ENCODE measurements at regions of chr10 and their contacts with region 1.

Region 1: DNA sequence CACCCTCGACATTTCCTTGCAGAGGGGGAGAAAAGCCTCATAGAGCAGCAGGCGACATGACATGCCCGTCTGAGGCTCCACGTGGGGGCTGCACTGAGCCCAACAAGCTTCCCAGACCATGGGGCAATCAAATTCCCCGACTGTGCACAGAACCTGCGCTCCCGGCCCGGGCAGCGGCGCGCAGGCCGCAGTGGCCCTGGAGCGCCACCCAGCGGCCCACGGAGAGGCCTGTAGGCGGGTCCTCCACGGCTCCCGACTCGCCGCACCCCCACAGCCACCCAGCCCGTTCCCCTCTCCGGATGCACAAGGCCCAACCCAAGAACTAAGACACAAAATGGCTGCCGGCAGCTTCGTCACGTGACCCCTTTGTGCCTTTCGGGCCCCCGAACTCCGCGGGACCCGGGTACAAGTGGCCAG is 816 bp downstream of the EPC1 start:
- DNase-seq: peak; percentile 97 to 98 (median 98)
- H3K4me3 ChIP-seq: peak overlapping the region; percentile 82 to 100
- H3K4me3 Mint-ChIP-seq: peak overlapping the region; percentile 90 to 98 (median 94)
- H3K27ac ChIP-seq: peak overlapping the region; percentile 100
- H3K27ac Mint-ChIP-seq: peak overlapping the region; percentile 99 to 100 (median 99)
- H3K4me1 ChIP-seq: peaks cover 78% of the 10 kb centered on the region
- H3K4me1 Mint-ChIP-seq: peaks cover 48 to 86% (median 65%) of the 10 kb centered on the region in 4 donors
- H3K27me3 ChIP-seq: no peaks in the 10 kb centered on the region
- H3K27me3 Mint-ChIP-seq: no peaks in the 10 kb centered on the region

Region 2: DNA sequence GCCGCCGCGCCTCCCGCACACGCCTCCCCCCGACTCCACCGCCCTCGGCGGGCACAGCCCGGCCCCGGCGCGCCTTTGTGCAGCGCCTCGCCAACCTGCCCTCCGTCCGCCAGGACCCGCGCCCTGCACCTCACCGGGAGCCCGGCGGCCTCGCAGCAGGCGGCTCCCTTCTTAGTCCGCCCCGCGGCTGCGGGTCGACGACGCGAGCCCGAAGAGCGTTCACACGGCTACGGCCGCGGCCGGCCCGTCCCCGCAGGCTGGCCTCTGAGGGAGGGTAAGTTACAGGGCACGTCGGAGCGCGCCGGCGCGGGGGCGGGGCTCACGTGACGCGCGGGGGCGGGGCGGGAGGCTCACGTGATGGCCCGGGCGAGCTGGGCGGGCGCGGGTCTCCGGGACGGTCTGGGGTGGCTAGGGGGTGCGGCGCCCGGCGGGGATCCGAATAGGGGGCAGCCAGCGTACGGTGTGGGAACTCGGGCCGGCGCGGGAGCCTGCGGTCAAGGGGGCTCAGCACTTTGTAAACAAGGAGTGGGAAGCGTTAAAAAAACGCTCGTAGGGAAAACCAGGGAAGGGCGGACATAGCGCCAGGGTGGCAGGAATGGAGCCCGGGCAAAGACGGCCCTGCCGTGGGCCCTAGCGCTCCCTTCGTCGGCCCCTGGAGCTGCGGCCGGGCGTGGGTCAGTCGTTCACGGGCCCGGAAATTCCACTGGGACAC is 417.4 kb before region 1 on chr10 and contains the start of gene ARHGAP12:
- CTCF ChIA-PET with region 1: no interaction called
- POLR2A ChIA-PET with region 1: no interaction called
- intact Hi-C with region 1: loop called (anchors 10 kb)
- DNase-seq: peak; percentile 84 to 88 (median 85)
- H3K4me3 ChIP-seq: peak within 1 kb of the TSS; percentile 86 to 91
- H3K4me3 Mint-ChIP-seq: peak within 1 kb of the TSS; percentile 93 to 95 (median 93)
- H3K27ac ChIP-seq: peak within 1 kb of the TSS; percentile 66
- H3K27ac Mint-ChIP-seq: peak within 1 kb of the TSS; percentile 66 to 97 (median 93)
- H3K4me1 ChIP-seq: peaks cover 54% of the 10 kb centered on the region
- H3K4me1 Mint-ChIP-seq: peaks cover 36 to 51% (median 44%) of the 10 kb centered on the region in 4 donors
- H3K27me3 ChIP-seq: no peaks in the 10 kb centered on the region
- H3K27me3 Mint-ChIP-seq: no peaks in the 10 kb centered on the region
- total RNA-seq, gene ARHGAP12: 30.1 to 31.2 TPM

Region 3: GRCh38 chr10:32112055-32112454 is 234.1 kb before region 1 on chr10:
- CTCF ChIA-PET with region 1: no interaction called
- POLR2A ChIA-PET with region 1: no interaction called
- intact Hi-C with region 1: no loop called
- DNase-seq: no peak
- H3K4me3 ChIP-seq: no peak overlapping the region
- H3K4me3 Mint-ChIP-seq: no peak overlapping the region
- H3K27ac ChIP-seq: no peak overlapping the region
- H3K27ac Mint-ChIP-seq: no peak overlapping the region
- H3K4me1 ChIP-seq: no peaks in the 10 kb centered on the region
- H3K4me1 Mint-ChIP-seq: no peaks in the 10 kb centered on the region
- H3K27me3 ChIP-seq: no peaks in the 10 kb centered on the region
- H3K27me3 Mint-ChIP-seq: peaks cover 7 to 10% of the 10 kb centered on the region in 2 donors

Region 4: DNA sequence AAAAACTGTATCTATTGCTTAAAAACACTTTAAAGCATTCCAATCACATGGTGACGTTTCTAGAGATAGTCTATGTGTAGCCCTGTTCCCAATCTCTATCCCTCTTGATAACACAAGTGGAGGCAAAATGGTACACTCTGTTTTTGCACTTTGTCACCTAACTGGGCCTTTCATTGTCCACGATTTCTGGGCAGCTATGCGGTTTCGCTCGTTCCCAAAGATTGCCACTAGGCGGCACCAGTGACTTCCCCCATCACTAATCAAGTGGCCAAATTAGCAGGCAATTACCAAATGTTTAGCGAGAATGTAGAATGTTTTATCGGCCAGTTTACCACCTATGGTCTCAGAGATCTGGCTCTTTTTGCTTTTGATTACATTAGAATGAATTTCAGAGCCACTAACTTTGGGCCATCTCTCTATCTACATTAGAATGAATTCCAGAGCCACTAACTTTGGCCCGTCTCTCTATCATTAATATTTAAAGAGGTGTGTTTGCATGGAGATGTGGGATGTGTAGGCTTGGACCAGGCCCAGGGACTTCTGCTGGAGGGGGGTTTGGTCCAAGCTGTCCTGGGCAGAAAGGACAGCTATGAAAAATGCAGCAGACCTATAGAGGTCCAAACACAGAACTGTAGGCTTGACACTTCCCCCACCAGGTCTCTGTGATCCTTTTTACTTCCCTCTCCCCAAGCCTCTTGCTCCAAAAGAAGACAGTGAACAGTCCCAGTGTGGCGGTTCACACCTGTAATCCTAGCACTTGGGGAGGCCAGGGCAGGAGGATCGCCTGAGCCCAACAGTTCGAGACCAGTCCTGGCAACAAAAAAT is 89.3 kb before region 1 on chr10:
- CTCF ChIA-PET with region 1: interaction called, 35 read pairs
- POLR2A ChIA-PET with region 1: interaction called, 13 read pairs
- intact Hi-C with region 1: loop called (anchors 1 kb)
- DNase-seq: peak; percentile 62 to 67 (median 66)
- H3K4me3 ChIP-seq: no peak overlapping the region
- H3K4me3 Mint-ChIP-seq: peak overlapping the region in 3 of 8 donors; percentile 5 to 44 (median 20)
- H3K27ac ChIP-seq: no peak overlapping the region
- H3K27ac Mint-ChIP-seq: peak overlapping the region in 1 of 7 donors; percentile 46
- H3K4me1 ChIP-seq: peaks cover 7% of the 10 kb centered on the region
- H3K4me1 Mint-ChIP-seq: peaks cover 5 to 10% (median 7%) of the 10 kb centered on the region in 4 donors
- H3K27me3 ChIP-seq: no peaks in the 10 kb centered on the region
- H3K27me3 Mint-ChIP-seq: no peaks in the 10 kb centered on the region

Region 5: DNA sequence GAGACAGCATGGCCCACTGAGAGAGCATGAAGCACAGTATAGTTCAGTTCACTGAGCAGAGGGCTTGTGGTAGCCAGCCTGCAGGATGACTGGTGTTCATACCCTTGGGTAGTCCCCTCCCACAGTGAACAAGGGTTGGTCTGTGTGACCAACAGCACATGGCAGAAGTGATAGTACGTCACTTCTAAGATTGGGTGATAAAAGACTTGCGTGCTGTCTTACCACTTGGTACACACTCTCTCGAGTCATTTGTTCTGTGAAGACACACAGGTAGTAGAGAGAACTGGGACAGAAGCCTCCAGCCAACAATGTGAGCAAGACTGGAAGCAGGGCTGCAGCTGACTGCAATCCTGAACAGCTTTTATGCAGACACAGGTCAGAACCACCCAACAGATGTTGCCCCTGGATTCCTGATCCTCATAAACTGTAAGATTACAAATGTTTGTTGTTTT is 13.8 kb before region 1 on chr10:
- CTCF ChIA-PET with region 1: interaction called, 17 read pairs
- POLR2A ChIA-PET with region 1: interaction called, 21 read pairs
- intact Hi-C with region 1: loop called (anchors 2 kb)
- DNase-seq: peak; percentile 70 to 95 (median 83)
- H3K4me3 ChIP-seq: no peak overlapping the region
- H3K4me3 Mint-ChIP-seq: peak overlapping the region; percentile 34 to 88 (median 68)
- H3K27ac ChIP-seq: peak overlapping the region; percentile 46
- H3K27ac Mint-ChIP-seq: peak overlapping the region; percentile 89 to 94 (median 93)
- H3K4me1 ChIP-seq: peaks cover 100% of the 10 kb centered on the region
- H3K4me1 Mint-ChIP-seq: peaks cover 80 to 97% (median 90%) of the 10 kb centered on the region in 4 donors
- H3K27me3 ChIP-seq: no peaks in the 10 kb centered on the region
- H3K27me3 Mint-ChIP-seq: no peaks in the 10 kb centered on the region

Region 6: DNA sequence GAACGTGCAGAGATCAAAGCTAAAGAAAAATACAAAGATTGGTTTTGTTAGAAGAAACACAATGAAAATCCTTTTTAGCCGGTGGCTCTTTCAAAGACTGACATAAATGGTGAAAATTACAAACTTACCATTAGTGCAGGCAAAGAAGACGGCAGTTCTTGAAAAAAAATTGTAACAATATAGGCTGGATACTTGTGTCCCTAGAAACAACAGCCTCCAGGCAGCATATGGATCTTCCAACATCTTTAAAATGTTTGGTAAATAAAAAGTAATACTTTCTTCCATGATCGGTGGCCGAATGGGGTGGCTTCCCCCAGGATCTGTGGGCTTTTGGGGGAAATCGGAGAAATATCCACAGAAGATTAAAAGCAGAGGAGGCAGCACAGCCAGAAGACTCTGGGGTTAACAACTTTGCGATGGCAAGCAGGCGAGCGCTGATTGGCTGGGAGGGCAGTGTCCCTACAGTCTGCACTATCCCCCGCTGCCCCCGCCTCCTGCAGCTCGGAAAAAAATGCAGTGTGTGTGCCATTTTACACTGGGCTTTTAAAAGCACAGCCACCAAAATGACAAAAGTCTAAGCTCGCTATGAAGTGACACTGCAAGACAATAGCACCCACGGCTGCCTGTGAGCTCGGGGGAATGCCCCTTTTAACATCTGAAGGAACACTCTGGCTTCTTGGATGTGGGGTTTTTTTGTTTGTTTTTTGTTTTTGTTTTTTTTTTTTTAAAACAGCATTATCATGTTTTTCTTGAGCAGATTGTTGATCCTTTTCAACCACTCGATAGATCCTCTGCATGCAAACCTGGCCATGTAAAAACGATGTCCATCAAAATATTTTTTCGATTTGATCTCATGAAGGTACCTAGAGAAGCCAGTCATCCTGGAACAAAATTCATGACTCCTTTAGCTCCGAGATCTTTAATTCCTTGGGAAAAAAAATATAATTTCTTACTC is 32.5 kb after region 1 on chr10:
- CTCF ChIA-PET with region 1: interaction called, 13 read pairs
- POLR2A ChIA-PET with region 1: interaction called, 56 read pairs
- intact Hi-C with region 1: loop called (anchors 1 kb)
- DNase-seq: peak; percentile 88 to 97 (median 91)
- H3K4me3 ChIP-seq: peak overlapping the region; percentile 74 to 99
- H3K4me3 Mint-ChIP-seq: no peak overlapping the region
- H3K27ac ChIP-seq: peak overlapping the region; percentile 73
- H3K27ac Mint-ChIP-seq: no peak overlapping the region
- H3K4me1 ChIP-seq: peaks cover 34% of the 10 kb centered on the region
- H3K4me1 Mint-ChIP-seq: peaks cover 17 to 24% (median 19%) of the 10 kb centered on the region in 4 donors
- H3K27me3 ChIP-seq: no peaks in the 10 kb centered on the region
- H3K27me3 Mint-ChIP-seq: no peaks in the 10 kb centered on the region